Right cardiac atrium (tissue), 5 donors: ENCODE measurements at regions of chr3 and their contacts with region 1.

Region 1: GRCh38 chr3:37700466-37701248 is 161.0 kb upstream of the CTDSPL start:
- DNase-seq: no peak
- ATAC-seq: peak in 1 of 2 donors; percentile 45
- H3K4me3 ChIP-seq: no peak overlapping the region
- H3K27ac ChIP-seq: no peak overlapping the region
- H3K4me1 ChIP-seq: no peaks in the 10 kb centered on the region
- H3K27me3 ChIP-seq: no peaks in the 10 kb centered on the region

Region 2: DNA sequence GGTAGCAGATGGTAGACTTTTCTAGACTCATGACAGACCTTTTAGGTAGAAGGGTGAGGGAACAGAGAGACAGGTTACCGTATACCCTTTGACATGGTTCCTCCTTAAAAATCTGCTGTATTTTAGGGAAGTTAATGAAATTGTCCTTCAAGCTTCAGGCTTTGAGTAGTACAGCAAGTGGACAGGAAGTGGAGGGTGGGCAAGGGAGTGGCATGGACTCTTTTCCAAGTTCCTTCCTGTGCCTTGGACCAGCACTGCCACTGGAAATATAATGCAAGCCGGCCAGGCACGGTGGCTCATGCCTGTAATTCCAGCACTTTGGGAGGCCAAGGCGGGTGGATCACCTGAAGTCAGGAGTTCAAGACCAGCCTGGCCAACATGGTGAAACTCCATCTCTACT is 370.2 kb before region 1 on chr3:
- intact Hi-C with region 1: no loop called
- DNase-seq: peak in 2 of 3 donors; percentile 51 to 55
- ATAC-seq: peak; percentile 50 to 55
- H3K4me3 ChIP-seq: no peak overlapping the region
- H3K27ac ChIP-seq: no peak overlapping the region
- H3K4me1 ChIP-seq: peaks cover 2% of the 10 kb centered on the region
- H3K27me3 ChIP-seq: no peaks in the 10 kb centered on the region

Region 3: DNA sequence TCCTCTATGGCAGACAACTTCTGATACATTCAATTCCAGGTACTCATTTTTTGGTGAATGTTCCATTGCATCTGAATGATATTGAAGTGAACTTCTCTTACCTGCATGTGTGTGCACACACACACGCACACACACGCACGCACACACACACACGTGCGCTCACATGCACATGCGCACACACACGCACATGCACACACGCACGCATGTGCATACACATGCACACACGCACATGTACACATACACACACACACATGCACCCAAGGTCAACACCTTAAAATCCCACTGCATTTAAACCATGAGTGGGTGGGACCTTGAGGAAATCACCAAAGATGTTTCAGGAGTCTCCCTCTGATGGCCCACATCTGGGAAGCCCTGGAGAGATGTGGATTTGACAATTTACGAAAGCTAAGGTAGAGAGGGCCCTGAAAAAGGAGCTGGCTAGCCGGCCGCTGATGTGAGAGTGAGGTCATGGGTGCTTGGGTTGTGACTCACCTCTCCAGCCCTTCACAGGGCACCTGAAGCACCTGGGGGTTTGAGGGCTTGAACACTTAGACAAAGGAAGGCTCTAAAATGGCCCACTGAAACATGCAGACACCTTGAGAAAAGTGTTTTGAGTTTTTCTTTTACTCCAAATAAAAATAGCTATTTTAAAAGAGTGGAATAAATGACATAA is 257.2 kb before region 1 on chr3:
- intact Hi-C with region 1: loop called in 1 of 4 experiments (anchors 10 kb)
- DNase-seq: no peak
- ATAC-seq: no peak
- H3K4me3 ChIP-seq: no peak overlapping the region
- H3K27ac ChIP-seq: no peak overlapping the region
- H3K4me1 ChIP-seq: no peaks in the 10 kb centered on the region
- H3K27me3 ChIP-seq: no peaks in the 10 kb centered on the region